H1 (cell line): ENCODE measurements at regions of chr3 and their contacts with region 1.

Region 1: DNA sequence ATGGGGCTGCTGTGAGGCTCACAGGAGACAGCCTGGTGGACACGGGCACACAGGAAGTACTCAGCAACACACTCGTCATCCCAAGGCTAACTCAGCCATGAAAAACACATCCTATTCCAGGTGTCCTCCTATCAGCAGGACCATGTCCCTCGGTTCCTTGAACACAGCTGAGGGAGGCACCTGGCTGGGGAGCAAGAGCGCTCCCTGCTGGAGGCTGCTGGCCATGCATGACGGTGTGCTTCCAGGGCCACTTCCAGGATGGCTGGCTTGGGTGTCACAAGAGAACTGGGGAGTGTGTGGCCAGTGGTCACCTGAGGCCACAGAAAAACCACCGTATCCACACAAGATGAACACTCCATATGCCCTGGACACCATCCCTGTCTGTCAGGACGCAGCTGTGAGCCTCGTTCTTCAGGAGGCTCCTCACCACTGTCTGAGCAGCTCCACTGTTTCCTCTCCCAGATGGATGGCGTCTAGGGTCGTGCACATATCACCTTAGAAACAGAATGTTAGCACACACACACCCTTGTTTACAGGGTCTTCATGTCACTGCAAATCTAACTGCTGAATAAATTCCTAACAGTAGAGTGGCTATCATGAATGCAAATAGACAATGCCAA is 31.0 kb downstream of the POC1A start:
- DNase-seq: peak; percentile 33 to 92
- H3K4me3 ChIP-seq: no peak overlapping the region
- H3K27ac ChIP-seq: no peak overlapping the region
- H3K4me1 ChIP-seq: no peaks in the 10 kb centered on the region
- H3K27me3 ChIP-seq: no peaks in the 10 kb centered on the region
- CTCF ChIP-seq: peak; percentile 95 to 100 (median 100)
- EP300 ChIP-seq: no peak
- POLR2A ChIP-seq: no peak
- RAD21 ChIP-seq: peak; percentile 92 to 93

Region 2: DNA sequence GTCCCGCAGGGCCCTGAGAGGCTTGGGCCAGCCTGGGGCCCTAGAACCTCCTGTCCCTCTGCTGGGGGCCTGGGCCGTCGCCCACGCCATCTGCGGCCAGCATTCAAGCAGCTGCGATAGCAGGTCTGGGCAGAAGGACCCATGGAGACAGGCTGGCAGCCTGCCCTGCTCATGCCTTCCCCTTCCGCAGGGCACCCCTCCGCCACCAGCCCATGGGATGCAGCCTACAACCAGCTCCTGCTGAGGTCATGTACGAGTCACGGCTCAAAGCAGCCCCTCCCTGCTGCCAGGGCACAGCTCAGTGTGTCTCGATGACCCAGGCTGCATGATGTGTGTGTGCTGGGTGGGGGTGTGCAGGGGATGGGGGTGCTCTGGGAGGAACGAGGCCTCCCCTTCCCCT is 94.6 kb before region 1 on chr3:
- CTCF ChIA-PET with region 1: interaction called, 15 read pairs
- POLR2A ChIA-PET with region 1: no interaction called
- DNase-seq: no peak
- H3K4me3 ChIP-seq: no peak overlapping the region
- H3K27ac ChIP-seq: no peak overlapping the region
- H3K4me1 ChIP-seq: peaks cover 0 to 2% (median 0%) of the 10 kb centered on the region in 4 experiments; a peak in 2 of 7 replicates
- H3K27me3 ChIP-seq: no peaks in the 10 kb centered on the region
- CTCF ChIP-seq: no peak
- EP300 ChIP-seq: no peak
- POLR2A ChIP-seq: no peak
- RAD21 ChIP-seq: no peak

Region 3: DNA sequence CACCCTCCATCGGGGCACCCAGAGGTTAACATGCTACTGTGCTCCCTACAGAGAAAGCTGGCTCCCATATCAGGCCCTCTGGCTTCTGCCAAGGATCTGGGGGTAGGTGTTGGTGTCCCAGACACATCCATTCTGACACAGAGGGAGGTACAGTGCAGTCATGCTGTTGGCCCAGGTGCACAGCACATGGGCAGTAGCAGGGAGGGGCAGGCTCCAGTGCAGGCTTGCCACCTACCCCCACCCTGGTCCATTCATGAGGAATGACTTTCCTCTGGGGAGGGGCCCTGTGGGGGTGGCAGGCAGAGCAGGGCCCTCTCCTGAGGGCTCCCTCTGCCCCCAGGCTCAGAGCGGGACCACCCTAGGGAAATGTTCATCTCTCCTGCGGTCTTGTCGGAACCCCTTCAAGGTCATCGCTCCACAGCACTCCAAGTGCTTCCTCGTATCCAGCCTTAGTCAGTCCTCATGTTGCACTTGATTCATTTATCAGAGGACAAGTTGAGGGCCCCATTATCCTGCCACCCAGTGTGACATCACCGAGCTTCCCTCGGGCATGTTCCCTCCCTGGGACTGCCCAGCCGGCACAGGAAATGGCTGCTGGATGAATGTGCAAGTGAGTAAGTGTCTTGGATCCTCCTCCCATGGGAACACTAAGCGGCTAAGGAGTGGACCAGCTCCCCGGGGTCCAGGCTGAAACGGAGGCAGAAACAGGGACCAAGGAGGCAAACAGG is 76.9 kb before region 1 on chr3:
- CTCF ChIA-PET with region 1: interaction called, 48 read pairs
- POLR2A ChIA-PET with region 1: no interaction called
- DNase-seq: no peak
- H3K4me3 ChIP-seq: no peak overlapping the region
- H3K27ac ChIP-seq: no peak overlapping the region
- H3K4me1 ChIP-seq: peaks cover 0 to 8% (median 3%) of the 10 kb centered on the region in 4 experiments; a peak in 5 of 7 replicates
- H3K27me3 ChIP-seq: no peaks in the 10 kb centered on the region
- CTCF ChIP-seq: no peak
- EP300 ChIP-seq: no peak
- POLR2A ChIP-seq: no peak
- RAD21 ChIP-seq: no peak

Region 4: GRCh38 chr3:52108302-52109232 is 14.6 kb before region 1 on chr3:
- CTCF ChIA-PET with region 1: interaction called, 48 read pairs
- POLR2A ChIA-PET with region 1: interaction called, 3 read pairs
- DNase-seq: no peak
- H3K4me3 ChIP-seq: no peak overlapping the region
- H3K27ac ChIP-seq: no peak overlapping the region
- H3K4me1 ChIP-seq: no peaks in the 10 kb centered on the region
- H3K27me3 ChIP-seq: no peaks in the 10 kb centered on the region
- CTCF ChIP-seq: peak in 2 of 3 experiments; percentile 12 to 20; a peak in 1 of 4 replicates
- EP300 ChIP-seq: no peak
- POLR2A ChIP-seq: no peak
- RAD21 ChIP-seq: peak in 1 of 2 experiments; percentile 42; a peak in 3 of 4 replicates

Region 5: DNA sequence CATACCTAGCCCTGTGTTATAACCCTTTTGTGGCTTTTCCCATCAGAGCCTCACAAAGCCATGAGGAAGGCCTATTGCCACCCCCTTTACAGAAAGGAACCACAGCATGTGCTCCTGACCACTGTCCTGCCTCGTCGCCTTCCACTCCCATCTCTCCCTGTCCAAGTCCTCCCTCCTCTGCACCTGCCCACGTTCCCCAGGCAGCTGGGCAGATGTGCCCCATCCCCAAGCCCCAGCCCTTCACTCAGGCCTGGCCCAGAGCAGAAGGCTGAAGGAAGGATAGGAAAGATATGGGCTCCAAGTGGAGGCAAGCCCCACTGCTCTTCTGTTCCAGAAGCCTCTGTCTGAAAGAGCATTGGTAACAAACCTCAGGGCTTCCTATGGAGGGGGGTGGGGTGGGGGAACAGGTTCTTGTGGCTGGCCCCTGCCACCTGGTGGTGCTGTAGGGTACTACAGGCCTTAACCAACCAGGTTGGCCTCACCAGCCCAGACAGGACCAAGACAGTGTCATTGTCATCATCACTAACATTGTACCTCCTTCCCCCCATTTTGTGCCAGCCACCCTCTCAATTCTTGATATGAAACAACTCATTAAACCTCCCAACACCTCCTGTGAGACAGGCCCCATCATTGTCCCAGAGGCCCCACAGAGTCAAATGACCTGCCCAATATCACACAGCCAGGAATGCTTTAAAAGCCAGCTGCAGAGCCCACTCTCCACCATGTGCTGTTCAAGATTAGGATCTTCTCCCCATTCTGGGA is 21.0 kb after region 1 on chr3:
- CTCF ChIA-PET with region 1: interaction called, 40 read pairs
- POLR2A ChIA-PET with region 1: interaction called, 6 read pairs
- DNase-seq: peak; percentile 54 to 92
- H3K4me3 ChIP-seq: no peak overlapping the region
- H3K27ac ChIP-seq: 0 out of 2 replicates have a peak overlapping the region, but pooled peaks have one; percentile 3
- H3K4me1 ChIP-seq: no peaks in the 10 kb centered on the region; a peak in 2 of 7 replicates
- H3K27me3 ChIP-seq: no peaks in the 10 kb centered on the region
- CTCF ChIP-seq: peak in 2 of 3 experiments; percentile 91 to 93; a peak in 3 of 4 replicates
- EP300 ChIP-seq: no peak
- POLR2A ChIP-seq: no peak
- RAD21 ChIP-seq: peak; percentile 82 to 86

Region 6: DNA sequence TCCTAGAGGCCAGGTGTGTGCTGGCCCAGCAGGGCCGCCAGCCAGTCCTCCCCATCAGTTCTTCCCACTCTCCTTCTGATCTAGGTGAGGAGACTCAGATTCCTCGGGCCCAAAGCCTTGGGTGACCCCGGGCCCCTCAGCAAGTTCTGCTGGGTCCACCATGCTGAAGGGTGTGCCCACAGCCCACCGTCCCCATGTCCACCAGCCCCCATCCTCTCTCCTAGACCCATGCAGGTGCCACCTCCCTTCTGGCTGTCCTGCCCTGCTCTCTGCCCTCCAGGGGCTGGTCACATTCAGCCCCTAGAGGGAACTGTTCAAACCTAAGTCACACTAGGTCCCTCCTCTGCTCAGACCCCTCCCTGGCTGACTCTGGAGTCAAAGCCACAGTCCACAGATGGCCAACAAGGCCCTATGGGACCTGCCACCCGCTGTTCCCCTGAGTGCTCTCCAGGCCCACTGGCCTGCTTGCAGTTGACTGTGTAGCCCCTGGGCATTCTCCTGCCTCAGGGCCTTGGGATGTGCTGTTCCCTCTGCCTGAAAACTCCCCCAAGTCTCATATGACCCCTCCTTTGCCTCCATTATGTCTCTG is 103.1 kb after region 1 on chr3:
- CTCF ChIA-PET with region 1: no interaction called
- POLR2A ChIA-PET with region 1: no interaction called
- DNase-seq: no peak
- H3K4me3 ChIP-seq: no peak overlapping the region
- H3K27ac ChIP-seq: no peak overlapping the region
- H3K4me1 ChIP-seq: peaks cover 0 to 4% (median 2%) of the 10 kb centered on the region in 4 experiments; a peak in 5 of 7 replicates
- H3K27me3 ChIP-seq: no peaks in the 10 kb centered on the region
- CTCF ChIP-seq: no peak
- EP300 ChIP-seq: no peak
- POLR2A ChIP-seq: no peak
- RAD21 ChIP-seq: no peak